Activated naive CD8-positive, alpha-beta T cell treated with anti-CD3 and anti-CD28 coated beads, Interleukin-2, amount 10 ng/mL, durations not matched to agents 7 days and 5 days (primary cell): ENCODE measurements at regions of chr12 and their contacts with region 1.

Region 1: DNA sequence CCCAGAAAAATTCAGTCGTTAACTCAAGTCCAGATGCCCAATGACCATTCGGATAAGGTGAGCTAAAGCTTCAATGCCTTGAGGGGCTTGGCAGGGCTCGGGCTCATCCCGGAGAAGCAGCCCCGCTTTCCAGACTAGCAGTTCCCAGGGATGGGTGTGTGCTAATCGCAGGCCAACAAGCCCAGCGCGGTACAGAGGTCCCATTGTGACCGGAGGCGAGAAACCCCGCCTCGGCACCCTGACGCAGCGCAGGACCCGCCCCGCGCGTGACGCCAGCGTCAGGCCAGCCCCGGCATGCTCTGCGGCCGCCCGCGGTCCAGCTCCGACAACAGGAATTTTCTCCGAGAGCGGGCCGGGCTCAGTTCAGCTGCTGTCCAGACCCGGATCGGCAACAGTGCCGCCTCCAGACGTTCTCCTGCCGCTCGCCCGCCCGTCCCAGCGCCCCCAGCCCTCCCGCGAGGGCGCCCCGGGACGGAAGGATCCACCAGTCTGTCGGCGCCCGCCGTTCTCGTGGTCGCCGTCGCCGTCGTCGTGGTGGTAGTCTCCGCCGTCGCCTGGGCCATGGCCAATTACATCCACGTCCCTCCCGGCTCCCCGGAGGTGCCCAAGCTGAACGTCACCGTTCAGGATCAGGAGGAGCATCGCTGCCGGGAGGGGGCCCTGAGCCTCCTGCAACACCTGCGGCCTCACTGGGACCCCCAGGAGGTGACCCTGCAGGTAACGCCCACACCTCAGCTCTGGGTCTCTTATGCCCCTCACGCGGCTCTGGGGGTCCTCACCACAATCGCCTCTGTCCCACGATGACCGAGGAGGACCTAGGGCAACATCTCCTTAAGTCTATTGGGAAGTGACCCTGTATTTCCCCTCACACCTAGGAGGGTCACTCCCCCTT is at the start of gene ETNK1:
- DNase-seq: peak; percentile 92
- ATAC-seq: peak; percentile 98
- H3K4me3 Mint-ChIP-seq: peak within 1 kb of the TSS; percentile 94
- H3K27ac Mint-ChIP-seq: peak within 1 kb of the TSS; percentile 91
- H3K4me1 Mint-ChIP-seq: peaks cover 29% of the 10 kb centered on the region
- H3K27me3 Mint-ChIP-seq: peaks cover 24% of the 10 kb centered on the region
- total RNA-seq, gene ETNK1: 73.0 to 74.0 TPM

Region 2: GRCh38 chr12:22544038-22544979 is 80.8 kb before region 1 on chr12 and contains the start of gene C2CD5:
- POLR2A ChIA-PET with region 1: interaction called, 12 read pairs
- DNase-seq: peak; percentile 90
- ATAC-seq: peak; percentile 87
- H3K4me3 Mint-ChIP-seq: peak within 1 kb of the TSS; percentile 96
- H3K27ac Mint-ChIP-seq: peak within 1 kb of the TSS; percentile 94
- H3K4me1 Mint-ChIP-seq: peaks cover 28% of the 10 kb centered on the region
- H3K27me3 Mint-ChIP-seq: peaks cover 9% of the 10 kb centered on the region
- total RNA-seq, gene C2CD5: 48.5 to 54.2 TPM